CD4-positive, alpha-beta T cell (primary cell): ENCODE measurements at regions of chr6 and their contacts with region 1.

Region 1: GRCh38 chr6:26183581-26184366 is 96.5 kb downstream of the HFE start:
- DNase-seq: peak in 13 of 14 experiments; percentile 20 to 94 (median 48)
- ATAC-seq: peak; percentile 89
- H3K4me3 ChIP-seq: peak overlapping the region; percentile 62
- H3K4me3 Mint-ChIP-seq: peak overlapping the region; percentile 99
- H3K27ac ChIP-seq: peak overlapping the region; percentile 43 to 72
- H3K27ac Mint-ChIP-seq: peak overlapping the region; percentile 86
- H3K4me1 ChIP-seq: peaks cover 34% of the 10 kb centered on the region
- H3K4me1 Mint-ChIP-seq: peaks cover 42% of the 10 kb centered on the region
- H3K27me3 ChIP-seq: no peaks in the 10 kb centered on the region
- H3K27me3 Mint-ChIP-seq: no peaks in the 10 kb centered on the region
- CTCF ChIP-seq: no peak

Region 2: GRCh38 chr6:25706314-25707014 is 477.3 kb before region 1 on chr6:
- CTCF ChIA-PET with region 1: no interaction called
- POLR2A ChIA-PET with region 1: no interaction called
- intact Hi-C with region 1: no loop called
- DNase-seq: no peak
- ATAC-seq: no peak
- H3K4me3 ChIP-seq: no peak overlapping the region
- H3K4me3 Mint-ChIP-seq: no peak overlapping the region
- H3K27ac ChIP-seq: no peak overlapping the region
- H3K27ac Mint-ChIP-seq: no peak overlapping the region
- H3K4me1 ChIP-seq: no peaks in the 10 kb centered on the region
- H3K4me1 Mint-ChIP-seq: no peaks in the 10 kb centered on the region
- H3K27me3 ChIP-seq: peaks cover 0 to 5% of the 10 kb centered on the region in 2 experiments
- H3K27me3 Mint-ChIP-seq: peaks cover 22% of the 10 kb centered on the region
- CTCF ChIP-seq: no peak

Region 3: DNA sequence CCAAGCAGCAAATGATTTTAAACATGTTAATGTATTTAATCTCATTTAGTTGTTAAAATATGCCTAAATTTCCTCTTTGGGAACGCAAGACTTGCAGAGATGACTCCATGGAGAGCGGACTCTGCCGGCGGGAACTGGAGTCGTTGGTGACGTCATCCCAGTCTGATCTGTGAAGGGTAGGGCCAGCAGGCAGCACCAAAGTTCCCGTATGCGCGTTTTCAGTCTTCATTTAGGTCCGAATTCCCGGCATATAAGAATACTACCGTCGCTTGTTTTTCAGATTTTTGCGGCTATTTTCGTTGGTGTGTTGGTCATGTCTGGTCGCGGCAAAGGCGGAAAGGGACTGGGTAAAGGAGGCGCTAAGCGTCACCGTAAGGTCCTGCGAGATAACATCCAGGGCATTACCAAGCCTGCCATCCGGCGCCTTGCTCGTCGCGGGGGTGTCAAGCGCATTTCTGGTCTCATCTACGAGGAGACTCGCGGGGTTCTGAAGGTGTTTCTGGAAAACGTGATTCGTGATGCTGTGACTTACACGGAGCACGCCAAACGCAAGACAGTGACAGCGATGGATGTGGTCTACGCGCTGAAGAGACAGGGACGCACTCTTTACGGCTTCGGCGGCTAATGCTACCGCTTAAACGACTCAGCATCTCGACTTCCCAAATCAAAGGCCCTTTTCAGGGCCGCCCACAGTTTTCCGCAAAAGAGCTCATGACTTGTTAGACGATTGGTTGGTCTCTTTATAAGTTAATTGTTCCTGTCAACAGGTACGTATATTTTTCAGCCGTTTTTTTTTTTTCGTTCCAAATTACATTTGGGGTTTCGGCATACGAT is 20.8 kb after region 1 on chr6:
- CTCF ChIA-PET with region 1: interaction called, 56 read pairs
- POLR2A ChIA-PET with region 1: interaction called, 866 read pairs
- intact Hi-C with region 1: loop called in 1 of 2 experiments (anchors 2 kb)
- DNase-seq: peak; percentile 73 to 98 (median 80)
- ATAC-seq: peak; percentile 69
- H3K4me3 ChIP-seq: peak overlapping the region; percentile 68
- H3K4me3 Mint-ChIP-seq: no peak overlapping the region
- H3K27ac ChIP-seq: peak overlapping the region; percentile 89 to 90
- H3K27ac Mint-ChIP-seq: no peak overlapping the region
- H3K4me1 ChIP-seq: peaks cover 34% of the 10 kb centered on the region
- H3K4me1 Mint-ChIP-seq: peaks cover 8% of the 10 kb centered on the region
- H3K27me3 ChIP-seq: no peaks in the 10 kb centered on the region
- H3K27me3 Mint-ChIP-seq: no peaks in the 10 kb centered on the region
- CTCF ChIP-seq: peak; percentile 32

Region 4: DNA sequence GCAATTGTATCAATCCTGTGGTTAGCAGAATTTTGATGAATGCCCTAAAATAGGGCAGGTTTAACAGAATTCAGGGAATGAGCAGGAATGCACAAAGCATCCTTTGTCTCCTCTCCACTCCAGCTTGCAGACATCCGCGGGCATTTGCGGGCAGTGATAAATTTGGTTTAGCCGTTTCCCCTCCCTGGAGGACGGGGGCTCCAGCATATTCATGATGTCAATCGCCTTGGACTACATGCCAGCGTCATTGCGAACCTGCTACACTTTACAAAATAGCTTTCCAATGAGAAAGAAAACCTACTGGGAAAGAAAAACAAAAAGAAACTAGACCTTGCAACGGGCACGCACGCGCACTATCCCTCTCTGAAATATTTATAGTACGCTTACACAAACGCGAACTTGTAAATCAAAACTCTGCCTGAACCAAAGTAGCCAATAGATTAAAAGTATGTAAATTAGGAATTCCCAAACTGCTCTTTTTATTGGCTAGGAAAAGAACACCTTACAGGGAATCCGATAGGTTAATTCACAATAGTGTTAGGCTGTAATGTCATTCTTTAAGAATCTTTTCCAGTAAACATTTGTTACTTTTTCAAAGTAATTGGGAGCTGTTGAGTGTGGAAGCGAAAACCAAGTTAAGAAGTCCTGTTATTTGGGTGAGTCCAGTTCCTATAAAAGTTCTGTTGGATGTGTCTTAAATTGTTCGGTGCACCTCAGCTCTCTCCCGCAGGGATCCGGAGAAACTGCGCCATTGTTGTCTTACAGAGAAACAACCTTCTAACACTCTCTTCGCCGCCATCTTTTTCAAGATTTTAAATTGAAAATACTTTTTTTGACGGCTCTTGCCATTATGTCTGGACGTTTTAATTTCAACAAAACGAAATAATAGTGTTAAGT is 40.1 kb after region 1 on chr6:
- CTCF ChIA-PET with region 1: interaction called, 4 read pairs
- POLR2A ChIA-PET with region 1: interaction called, 1,838 read pairs
- intact Hi-C with region 1: no loop called
- DNase-seq: peak in 13 of 14 experiments; percentile 45 to 93 (median 60)
- ATAC-seq: peak; percentile 87
- H3K4me3 ChIP-seq: peak overlapping the region; percentile 68
- H3K4me3 Mint-ChIP-seq: no peak overlapping the region
- H3K27ac ChIP-seq: peak overlapping the region; percentile 72 to 82
- H3K27ac Mint-ChIP-seq: no peak overlapping the region
- H3K4me1 ChIP-seq: peaks cover 18% of the 10 kb centered on the region
- H3K4me1 Mint-ChIP-seq: peaks cover 5% of the 10 kb centered on the region
- H3K27me3 ChIP-seq: no peaks in the 10 kb centered on the region
- H3K27me3 Mint-ChIP-seq: no peaks in the 10 kb centered on the region
- CTCF ChIP-seq: no peak

Region 5: GRCh38 chr6:26240154-26241032 is 56.6 kb after region 1 on chr6:
- CTCF ChIA-PET with region 1: interaction called, 5 read pairs
- POLR2A ChIA-PET with region 1: interaction called, 125 read pairs
- intact Hi-C with region 1: no loop called
- DNase-seq: peak; percentile 45 to 96 (median 64)
- ATAC-seq: peak; percentile 76
- H3K4me3 ChIP-seq: peak overlapping the region; percentile 66
- H3K4me3 Mint-ChIP-seq: peak overlapping the region; percentile 84
- H3K27ac ChIP-seq: peak overlapping the region; percentile 78 to 90
- H3K27ac Mint-ChIP-seq: peak overlapping the region; percentile 96
- H3K4me1 ChIP-seq: peaks cover 17% of the 10 kb centered on the region
- H3K4me1 Mint-ChIP-seq: peaks cover 23% of the 10 kb centered on the region
- H3K27me3 ChIP-seq: no peaks in the 10 kb centered on the region
- H3K27me3 Mint-ChIP-seq: no peaks in the 10 kb centered on the region
- CTCF ChIP-seq: no peak

Region 6: DNA sequence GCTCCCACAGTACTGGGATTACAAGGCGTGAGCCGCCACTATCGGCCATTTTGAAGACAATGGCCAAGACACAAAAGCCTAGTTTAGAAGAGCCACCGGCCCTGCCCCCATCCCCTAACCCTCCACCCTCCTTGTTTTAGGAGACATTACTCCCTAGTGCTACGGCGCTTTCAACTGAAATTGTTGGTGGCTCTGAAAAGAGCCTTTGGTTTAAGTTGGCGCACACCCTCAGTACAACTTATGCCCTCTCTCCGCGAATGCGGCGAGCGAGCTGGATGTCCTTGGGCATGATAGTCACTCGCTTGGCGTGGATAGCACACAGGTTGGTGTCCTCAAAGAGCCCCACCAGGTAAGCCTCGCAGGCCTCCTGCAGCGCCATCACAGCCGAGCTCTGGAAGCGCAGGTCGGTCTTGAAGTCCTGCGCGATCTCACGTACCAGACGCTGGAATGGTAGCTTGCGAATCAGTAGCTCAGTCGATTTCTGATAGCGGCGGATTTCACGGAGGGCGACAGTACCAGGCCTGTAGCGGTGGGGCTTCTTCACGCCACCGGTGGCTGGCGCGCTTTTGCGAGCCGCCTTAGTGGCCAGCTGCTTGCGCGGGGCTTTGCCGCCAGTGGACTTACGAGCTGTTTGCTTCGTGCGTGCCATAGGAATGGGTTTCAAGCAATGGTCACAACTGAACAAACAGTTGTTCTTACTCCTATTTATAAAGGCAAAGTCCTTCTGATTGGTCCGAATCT is 66.4 kb after region 1 on chr6:
- CTCF ChIA-PET with region 1: interaction called, 24 read pairs
- POLR2A ChIA-PET with region 1: interaction called, 47 read pairs
- intact Hi-C with region 1: loop called in 1 of 2 experiments (anchors 2 kb)
- DNase-seq: peak; percentile 64 to 93 (median 74)
- ATAC-seq: peak; percentile 78
- H3K4me3 ChIP-seq: peak overlapping the region; percentile 75
- H3K4me3 Mint-ChIP-seq: peak overlapping the region; percentile 97
- H3K27ac ChIP-seq: peak overlapping the region; percentile 72 to 80
- H3K27ac Mint-ChIP-seq: peak overlapping the region; percentile 88
- H3K4me1 ChIP-seq: peaks cover 29% of the 10 kb centered on the region
- H3K4me1 Mint-ChIP-seq: peaks cover 44% of the 10 kb centered on the region
- H3K27me3 ChIP-seq: no peaks in the 10 kb centered on the region
- H3K27me3 Mint-ChIP-seq: no peaks in the 10 kb centered on the region
- CTCF ChIP-seq: no peak